ENCODE measurements at regions of chr16 and their contacts with region 1.

Region 1: GRCh38 chr16:23534868-23535860 is 22.0 kb downstream of the EARS2 start:
- DNase-seq: no peak
- ATAC-seq: no peak
- H3K4me3 ChIP-seq: no peak overlapping the region
- H3K4me3 Mint-ChIP-seq: no peak overlapping the region
- H3K27ac ChIP-seq: no peak overlapping the region
- H3K27ac Mint-ChIP-seq: no peak overlapping the region
- H3K4me1 ChIP-seq: no peaks in the 10 kb centered on the region
- H3K4me1 Mint-ChIP-seq: no peaks in the 10 kb centered on the region
- H3K27me3 ChIP-seq: no peaks in the 10 kb centered on the region
- H3K27me3 Mint-ChIP-seq: no peaks in the 10 kb centered on the region
- CTCF ChIP-seq: no peak

Region 2: GRCh38 chr16:23384878-23385277 is 150.3 kb before region 1 on chr16:
- CTCF ChIA-PET with region 1: no interaction called
- POLR2A ChIA-PET with region 1: no interaction called
- intact Hi-C with region 1: no loop called
- DNase-seq: no peak
- ATAC-seq: no peak
- H3K4me3 ChIP-seq: no peak overlapping the region
- H3K4me3 Mint-ChIP-seq: no peak overlapping the region
- H3K27ac ChIP-seq: no peak overlapping the region
- H3K27ac Mint-ChIP-seq: no peak overlapping the region
- H3K4me1 ChIP-seq: no peaks in the 10 kb centered on the region
- H3K4me1 Mint-ChIP-seq: no peaks in the 10 kb centered on the region
- H3K27me3 ChIP-seq: no peaks in the 10 kb centered on the region
- H3K27me3 Mint-ChIP-seq: no peaks in the 10 kb centered on the region
- CTCF ChIP-seq: no peak

Region 3: GRCh38 chr16:23482778-23483177 is 52.4 kb before region 1 on chr16:
- CTCF ChIA-PET with region 1: no interaction called
- POLR2A ChIA-PET with region 1: no interaction called
- intact Hi-C with region 1: no loop called
- DNase-seq: peak in 8 of 9 experiments; percentile 17 to 94 (median 62)
- ATAC-seq: peak; percentile 83
- H3K4me3 ChIP-seq: no peak overlapping the region
- H3K4me3 Mint-ChIP-seq: peak overlapping the region; percentile 44
- H3K27ac ChIP-seq: peak overlapping the region; percentile 63 to 92
- H3K27ac Mint-ChIP-seq: peak overlapping the region; percentile 94
- H3K4me1 ChIP-seq: no peaks in the 10 kb centered on the region
- H3K4me1 Mint-ChIP-seq: peaks cover 11% of the 10 kb centered on the region
- H3K27me3 ChIP-seq: no peaks in the 10 kb centered on the region
- H3K27me3 Mint-ChIP-seq: no peaks in the 10 kb centered on the region
- CTCF ChIP-seq: no peak

Region 4: DNA sequence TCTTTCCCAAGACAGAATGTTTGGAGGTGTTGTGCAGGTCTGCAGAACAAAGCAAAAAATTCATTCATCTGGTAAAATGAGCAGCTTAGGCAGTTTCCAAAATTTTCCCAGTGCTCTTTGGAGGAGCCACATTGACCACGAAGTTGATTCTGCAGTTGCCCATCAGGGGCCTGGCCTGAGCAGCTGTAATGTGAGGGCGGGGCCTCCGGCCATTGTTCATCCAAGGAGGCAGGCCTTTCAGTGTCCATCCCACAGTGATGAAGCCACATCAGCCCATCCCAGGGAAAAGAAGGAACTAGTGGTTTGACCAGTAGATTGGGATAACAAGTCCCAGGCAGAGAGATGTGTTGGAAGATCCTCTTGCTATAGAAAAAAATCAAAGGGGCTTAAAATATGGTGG is 32.4 kb after region 1 on chr16:
- CTCF ChIA-PET with region 1: no interaction called
- POLR2A ChIA-PET with region 1: no interaction called
- intact Hi-C with region 1: loop called in 1 of 2 experiments (anchors 1 kb)
- DNase-seq: no peak
- ATAC-seq: no peak
- H3K4me3 ChIP-seq: no peak overlapping the region
- H3K4me3 Mint-ChIP-seq: no peak overlapping the region
- H3K27ac ChIP-seq: no peak overlapping the region
- H3K27ac Mint-ChIP-seq: no peak overlapping the region
- H3K4me1 ChIP-seq: no peaks in the 10 kb centered on the region
- H3K4me1 Mint-ChIP-seq: no peaks in the 10 kb centered on the region
- H3K27me3 ChIP-seq: no peaks in the 10 kb centered on the region
- H3K27me3 Mint-ChIP-seq: no peaks in the 10 kb centered on the region
- CTCF ChIP-seq: no peak

Region 5: GRCh38 chr16:23724096-23724784 is 189.1 kb after region 1 on chr16:
- CTCF ChIA-PET with region 1: no interaction called
- POLR2A ChIA-PET with region 1: no interaction called
- intact Hi-C with region 1: no loop called
- DNase-seq: no peak
- ATAC-seq: no peak
- H3K4me3 ChIP-seq: no peak overlapping the region
- H3K4me3 Mint-ChIP-seq: no peak overlapping the region
- H3K27ac ChIP-seq: no peak overlapping the region
- H3K27ac Mint-ChIP-seq: no peak overlapping the region
- H3K4me1 ChIP-seq: peaks cover 5% of the 10 kb centered on the region
- H3K4me1 Mint-ChIP-seq: no peaks in the 10 kb centered on the region
- H3K27me3 ChIP-seq: no peaks in the 10 kb centered on the region
- H3K27me3 Mint-ChIP-seq: peaks cover 19% of the 10 kb centered on the region
- CTCF ChIP-seq: no peak

Region 6: GRCh38 chr16:24336998-24337397 is 801.8 kb after region 1 on chr16:
- CTCF ChIA-PET with region 1: no interaction called
- POLR2A ChIA-PET with region 1: no interaction called
- intact Hi-C with region 1: no loop called
- DNase-seq: no peak
- ATAC-seq: no peak
- H3K4me3 ChIP-seq: no peak overlapping the region
- H3K4me3 Mint-ChIP-seq: no peak overlapping the region
- H3K27ac ChIP-seq: no peak overlapping the region
- H3K27ac Mint-ChIP-seq: no peak overlapping the region
- H3K4me1 ChIP-seq: no peaks in the 10 kb centered on the region
- H3K4me1 Mint-ChIP-seq: no peaks in the 10 kb centered on the region
- H3K27me3 ChIP-seq: no peaks in the 10 kb centered on the region
- H3K27me3 Mint-ChIP-seq: peaks cover 9% of the 10 kb centered on the region
- CTCF ChIP-seq: no peak

Measured in CD8-positive, alpha-beta T cell (primary cell).